ENCODE measurements at regions of chr3 and their contacts with region 1.

Region 1: GRCh38 chr3:135218304-135218703 is 423.2 kb downstream of the EPHB1 start:
- DNase-seq: peak; percentile 30 to 86
- ATAC-seq: peak; percentile 86 to 95 (median 94)
- H3K4me3 ChIP-seq: no peak overlapping the region
- H3K27ac ChIP-seq: peak overlapping the region; percentile 83
- H3K4me1 ChIP-seq: peaks cover 36% of the 10 kb centered on the region
- H3K27me3 ChIP-seq: no peaks in the 10 kb centered on the region
- CTCF ChIP-seq: peak; percentile 15

Region 2: DNA sequence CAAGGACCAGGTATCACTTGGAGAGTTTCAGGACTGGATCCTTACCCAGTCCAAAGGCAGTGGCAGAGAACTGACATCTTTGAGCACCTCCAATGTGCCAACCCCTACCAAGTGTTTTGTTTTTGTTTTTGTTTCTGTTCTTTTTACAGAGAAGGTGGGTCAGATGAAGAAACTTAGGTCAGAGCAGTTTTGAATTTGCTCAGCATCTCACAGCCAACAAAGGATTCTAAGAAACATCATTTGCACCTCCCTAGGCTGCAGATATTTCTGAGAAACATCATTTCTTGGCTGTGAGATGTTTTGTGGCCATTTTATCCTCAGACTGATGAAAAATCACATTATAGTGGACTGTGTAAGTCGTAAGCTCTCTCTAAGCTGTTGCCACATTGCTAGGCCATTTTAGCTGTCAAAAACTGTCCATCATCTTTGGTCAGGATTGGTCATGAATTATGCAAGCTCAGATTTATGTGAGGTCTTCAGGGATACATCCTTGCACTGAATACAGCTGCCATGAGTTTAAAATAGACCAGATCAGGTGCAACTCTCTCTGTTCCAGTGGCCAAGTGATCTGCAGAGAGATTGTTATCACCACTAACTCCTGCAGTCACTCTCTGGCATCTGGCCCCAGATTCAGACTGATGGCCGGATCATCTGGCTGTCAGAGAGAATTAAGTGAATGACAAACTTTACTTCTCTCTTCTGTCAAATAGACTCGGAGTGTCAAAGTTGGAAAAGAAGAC is 81.8 kb before region 1 on chr3:
- intact Hi-C with region 1: loop called (anchors 5 kb)
- DNase-seq: peak; percentile 22 to 81
- ATAC-seq: peak; percentile 94 to 97 (median 96)
- H3K4me3 ChIP-seq: no peak overlapping the region
- H3K27ac ChIP-seq: peak overlapping the region; percentile 69
- H3K4me1 ChIP-seq: peaks cover 19% of the 10 kb centered on the region
- H3K27me3 ChIP-seq: no peaks in the 10 kb centered on the region
- CTCF ChIP-seq: no peak

Region 3: DNA sequence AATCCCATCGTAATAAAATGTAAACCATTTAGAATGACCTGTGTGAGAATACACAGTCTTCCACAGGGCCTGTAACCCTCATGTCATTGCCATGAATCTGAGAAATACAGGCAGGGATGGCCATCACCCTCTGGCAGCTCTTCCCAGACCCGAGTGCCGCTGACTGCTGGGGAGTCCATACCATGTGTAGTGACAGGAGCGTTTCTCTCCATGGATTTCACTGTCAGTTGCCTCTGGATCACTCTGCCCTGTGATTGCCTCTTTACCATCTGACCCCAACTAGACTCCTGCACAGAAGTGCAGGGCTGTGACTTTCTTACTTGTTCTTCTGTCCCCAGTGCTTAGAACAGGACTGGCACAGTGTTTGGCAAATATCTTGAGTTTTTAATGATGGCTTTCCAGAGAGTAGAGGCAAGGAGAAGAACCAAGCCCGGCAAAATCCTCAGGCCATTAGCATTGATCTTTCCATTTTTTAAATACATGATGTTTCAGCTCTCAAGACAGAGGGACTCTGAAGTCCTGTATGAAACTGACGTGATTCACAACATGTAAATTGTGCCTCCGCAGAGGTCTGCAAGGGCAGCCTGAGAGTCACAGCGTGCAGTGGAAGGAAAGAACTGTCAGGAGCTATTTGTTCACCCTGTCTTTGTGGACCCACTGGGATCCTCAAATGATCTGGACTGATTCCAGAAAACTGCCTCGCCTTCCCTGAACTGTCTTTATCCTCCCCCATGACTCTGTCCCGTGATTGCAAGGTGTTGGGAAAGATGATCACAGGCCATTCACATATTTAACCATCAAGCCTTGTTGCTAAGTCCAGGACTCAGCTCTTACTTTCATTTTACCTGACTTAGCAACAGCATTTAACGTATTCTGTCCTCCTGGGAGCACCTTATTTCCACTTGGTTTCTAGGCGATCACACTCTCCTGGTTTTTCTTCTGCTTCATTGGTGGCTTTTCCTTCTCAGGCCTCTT is 68.3 kb before region 1 on chr3:
- intact Hi-C with region 1: loop called in 1 of 2 experiments (anchors 5 kb)
- DNase-seq: no peak
- ATAC-seq: no peak
- H3K4me3 ChIP-seq: no peak overlapping the region
- H3K27ac ChIP-seq: no peak overlapping the region
- H3K4me1 ChIP-seq: peaks cover 17% of the 10 kb centered on the region
- H3K27me3 ChIP-seq: no peaks in the 10 kb centered on the region
- CTCF ChIP-seq: no peak